Motor neuron (in vitro differentiated cells): ENCODE measurements at regions of chr1 and their contacts with region 1.

Region 1: GRCh38 chr1:54996359-54996868 is 2.3 kb upstream of the BSND start:
- ATAC-seq: peak in 3 of 8 experiments; percentile 92 to 94 (median 93)
- H3K4me3 ChIP-seq: no peak overlapping the region
- H3K27ac ChIP-seq: no peak overlapping the region
- H3K4me1 ChIP-seq: peaks cover 22 to 31% of the 10 kb centered on the region in 2 donors

Region 2: DNA sequence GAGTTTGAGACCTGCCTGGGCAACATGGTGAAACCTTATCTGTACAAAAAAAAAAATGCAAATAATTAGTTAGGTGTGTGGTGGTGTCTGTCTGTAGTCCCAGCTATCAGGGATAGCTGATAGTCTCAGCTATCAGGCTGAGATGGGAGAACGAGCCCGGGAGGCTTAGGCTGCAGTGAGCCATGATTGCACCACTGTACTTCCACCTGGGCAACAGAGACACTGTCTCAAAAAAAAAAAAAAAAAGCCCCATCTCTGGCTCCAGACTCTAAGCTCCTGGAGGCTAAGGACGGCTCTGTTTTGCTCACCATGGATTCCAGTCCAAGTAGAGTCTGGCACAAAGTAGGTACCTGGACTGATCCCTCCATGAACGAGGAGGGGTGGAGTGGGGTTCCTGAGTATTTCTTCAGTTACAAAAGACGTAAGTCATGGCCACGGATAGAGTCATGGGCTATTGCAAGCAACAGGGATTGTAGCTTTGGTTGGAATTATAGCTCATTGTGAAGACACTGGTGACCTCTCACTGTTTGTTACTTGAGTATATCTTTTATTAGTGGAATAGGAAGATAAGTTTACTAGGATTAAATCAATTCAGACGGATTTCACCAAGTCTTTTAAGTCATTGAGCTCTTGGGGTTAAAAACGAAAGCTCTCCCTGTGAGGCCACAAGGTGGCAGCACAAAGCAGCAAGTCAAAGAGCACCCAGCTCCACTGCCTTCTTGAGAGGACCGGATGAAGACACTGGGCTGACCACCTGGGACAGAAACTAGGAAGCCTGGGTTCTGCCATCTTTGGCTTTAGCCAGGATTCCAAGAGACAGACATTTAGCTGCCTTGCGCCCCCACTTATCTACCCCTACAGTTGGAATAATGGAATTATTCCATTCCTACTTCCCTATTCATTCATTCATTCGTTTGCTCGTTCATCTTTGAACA is 51.5 kb before region 1 on chr1:
- in situ Hi-C with region 1: loop called in 1 of 9 experiments (anchors 10 kb)
- ATAC-seq: peak; percentile 43 to 96 (median 74)
- H3K4me3 ChIP-seq: no peak overlapping the region
- H3K27ac ChIP-seq: no peak overlapping the region
- H3K4me1 ChIP-seq: no peaks in the 10 kb centered on the region

Region 3: DNA sequence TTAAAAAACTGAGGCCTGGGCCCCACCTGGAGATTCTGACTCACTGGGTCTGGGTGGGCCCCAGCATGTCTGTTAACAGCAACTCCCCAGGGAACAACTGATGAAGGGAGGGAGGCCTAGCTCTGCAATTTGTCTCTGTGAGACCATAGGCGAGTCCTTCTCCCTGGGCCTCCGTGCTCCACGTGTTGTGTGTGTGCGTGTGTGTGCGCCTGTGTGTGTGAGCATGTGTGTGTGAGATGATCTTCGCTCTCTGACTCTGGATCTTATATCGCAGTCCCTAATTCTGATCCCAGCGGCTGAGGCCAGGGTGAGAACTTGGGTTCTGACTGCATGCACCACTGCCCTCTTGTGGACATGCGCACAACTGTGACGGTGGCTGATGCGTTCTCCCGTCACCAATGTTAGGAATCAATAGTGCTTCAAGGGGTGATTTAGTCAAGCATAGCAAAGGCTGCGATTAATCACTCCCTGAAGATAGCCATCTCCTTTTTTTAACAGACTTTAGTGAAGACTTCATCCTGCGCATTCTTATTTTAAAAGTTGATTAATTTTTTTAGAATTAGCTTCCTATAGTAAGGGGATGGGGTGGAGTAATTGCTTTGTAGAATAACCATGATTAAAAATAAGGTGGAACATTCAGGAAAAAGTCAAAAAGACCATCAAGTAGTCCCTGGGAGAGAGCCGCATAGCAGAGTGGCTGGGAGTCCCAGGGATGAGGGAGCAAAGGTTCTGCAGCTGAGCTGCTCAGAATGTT is 281.1 kb after region 1 on chr1:
- in situ Hi-C with region 1: no loop called
- ATAC-seq: peak; percentile 81 to 99 (median 98)
- H3K4me3 ChIP-seq: no peak overlapping the region
- H3K27ac ChIP-seq: no peak overlapping the region
- H3K4me1 ChIP-seq: peaks cover 0 to 4% of the 10 kb centered on the region in 2 donors